Transverse colon (tissue), 4 donors: ENCODE measurements at regions of chr11 and their contacts with region 1.

Region 1: GRCh38 chr11:40701027-40701426 is 758.4 kb downstream of the LRRC4C start:
- DNase-seq: no peak
- H3K4me3 ChIP-seq: no peak overlapping the region
- H3K27ac ChIP-seq: no peak overlapping the region
- H3K4me1 ChIP-seq: no peaks in the 10 kb centered on the region
- H3K27me3 ChIP-seq: no peaks in the 10 kb centered on the region
- CTCF ChIP-seq: no peak
- EP300 ChIP-seq: no peak
- POLR2A ChIP-seq: no peak

Region 2: GRCh38 chr11:40746282-40746681 is 45.3 kb after region 1 on chr11:
- in situ Hi-C with region 1: no loop called
- intact Hi-C with region 1: loop called (anchors 2 kb)
- DNase-seq: no peak
- H3K4me3 ChIP-seq: no peak overlapping the region
- H3K27ac ChIP-seq: no peak overlapping the region
- H3K4me1 ChIP-seq: no peaks in the 10 kb centered on the region
- H3K27me3 ChIP-seq: no peaks in the 10 kb centered on the region
- CTCF ChIP-seq: no peak
- EP300 ChIP-seq: no peak
- POLR2A ChIP-seq: no peak

Region 3: GRCh38 chr11:40819230-40819629 is 118.2 kb after region 1 on chr11:
- in situ Hi-C with region 1: no loop called
- intact Hi-C with region 1: no loop called
- DNase-seq: no peak
- H3K4me3 ChIP-seq: no peak overlapping the region
- H3K27ac ChIP-seq: no peak overlapping the region
- H3K4me1 ChIP-seq: no peaks in the 10 kb centered on the region
- H3K27me3 ChIP-seq: no peaks in the 10 kb centered on the region
- CTCF ChIP-seq: no peak
- EP300 ChIP-seq: no peak
- POLR2A ChIP-seq: no peak